A549 (cell line): ENCODE measurements at regions of chr15 and their contacts with region 1.

Region 1: DNA sequence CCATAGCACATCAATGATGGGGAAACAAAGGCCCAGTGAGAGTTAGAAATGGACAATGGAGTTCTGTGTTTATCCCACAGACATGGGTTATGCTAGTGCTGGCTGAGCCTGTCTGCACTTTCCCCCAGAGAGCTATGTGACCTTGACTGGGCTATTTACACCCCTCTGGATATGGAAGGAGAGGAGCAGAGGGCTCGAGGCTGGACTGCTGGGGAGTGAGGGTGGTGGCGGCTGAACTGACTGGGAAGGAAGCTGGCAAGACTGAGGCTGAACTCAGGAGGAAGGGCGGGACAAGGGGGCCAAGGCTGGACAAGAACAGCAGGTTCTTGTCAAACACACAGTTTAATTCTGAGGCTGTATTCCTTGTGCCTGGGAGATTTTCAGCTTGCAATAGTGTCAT is 10.8 kb upstream of the INSYN1 start:
- DNase-seq: no peak
- ATAC-seq: no peak
- H3K4me3 ChIP-seq: no peak overlapping the region
- H3K27ac ChIP-seq: no peak overlapping the region
- H3K4me1 ChIP-seq: no peaks in the 10 kb centered on the region
- CTCF ChIP-seq: no peak
- EP300 ChIP-seq: no peak
- POLR2A ChIP-seq: no peak
- RAD21 ChIP-seq: no peak

Region 2: DNA sequence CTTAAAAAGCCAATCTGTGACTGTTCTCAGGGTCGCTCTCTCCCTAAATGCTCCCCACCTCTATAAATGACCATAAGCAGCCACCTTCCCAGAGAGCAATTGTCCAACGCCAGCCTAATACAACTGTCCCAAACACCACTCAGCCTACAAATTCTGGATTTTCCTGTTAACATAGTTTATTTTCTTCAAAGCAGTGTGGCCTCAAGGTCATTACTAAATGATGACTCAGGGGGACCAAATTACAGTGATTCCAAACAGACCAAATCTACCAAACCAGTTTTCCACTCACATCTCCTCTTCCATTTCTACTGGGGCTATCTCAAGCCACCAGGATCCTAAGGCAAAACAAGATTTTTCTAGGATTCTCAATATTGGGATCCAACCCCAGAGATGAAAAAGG is 1410.7 kb before region 1 on chr15:
- CTCF ChIA-PET with region 1: no interaction called
- POLR2A ChIA-PET with region 1: interaction called, 10 read pairs
- DNase-seq: no peak
- ATAC-seq: no peak
- H3K4me3 ChIP-seq: no peak overlapping the region
- H3K27ac ChIP-seq: no peak overlapping the region
- H3K4me1 ChIP-seq: no peaks in the 10 kb centered on the region
- CTCF ChIP-seq: no peak
- EP300 ChIP-seq: no peak
- POLR2A ChIP-seq: no peak
- RAD21 ChIP-seq: no peak

Region 3: GRCh38 chr15:73346735-73347312 is 417.1 kb before region 1 on chr15:
- CTCF ChIA-PET with region 1: no interaction called
- POLR2A ChIA-PET with region 1: no interaction called
- DNase-seq: peak; percentile 48 to 63
- ATAC-seq: peak; percentile 58 to 74; a peak in 4 of 6 replicates
- H3K4me3 ChIP-seq: no peak overlapping the region
- H3K27ac ChIP-seq: no peak overlapping the region
- H3K4me1 ChIP-seq: no peaks in the 10 kb centered on the region
- CTCF ChIP-seq: no peak
- EP300 ChIP-seq: no peak
- POLR2A ChIP-seq: no peak
- RAD21 ChIP-seq: no peak